ENCODE measurements at regions of chr1 and their contacts with region 1.

Region 1: GRCh38 chr1:153510984-153511410 is 24.8 kb downstream of the S100A6 start:
- DNase-seq: no peak
- ATAC-seq: peak; percentile 97
- H3K4me3 ChIP-seq: no peak overlapping the region
- H3K27ac ChIP-seq: no peak overlapping the region
- H3K4me1 ChIP-seq: no peaks in the 10 kb centered on the region
- H3K27me3 ChIP-seq: no peaks in the 10 kb centered on the region
- CTCF ChIP-seq: peak; percentile 85 to 97 (median 91)
- EP300 ChIP-seq: no peak
- POLR2A ChIP-seq: no peak
- RAD21 ChIP-seq: peak; percentile 92

Region 2: DNA sequence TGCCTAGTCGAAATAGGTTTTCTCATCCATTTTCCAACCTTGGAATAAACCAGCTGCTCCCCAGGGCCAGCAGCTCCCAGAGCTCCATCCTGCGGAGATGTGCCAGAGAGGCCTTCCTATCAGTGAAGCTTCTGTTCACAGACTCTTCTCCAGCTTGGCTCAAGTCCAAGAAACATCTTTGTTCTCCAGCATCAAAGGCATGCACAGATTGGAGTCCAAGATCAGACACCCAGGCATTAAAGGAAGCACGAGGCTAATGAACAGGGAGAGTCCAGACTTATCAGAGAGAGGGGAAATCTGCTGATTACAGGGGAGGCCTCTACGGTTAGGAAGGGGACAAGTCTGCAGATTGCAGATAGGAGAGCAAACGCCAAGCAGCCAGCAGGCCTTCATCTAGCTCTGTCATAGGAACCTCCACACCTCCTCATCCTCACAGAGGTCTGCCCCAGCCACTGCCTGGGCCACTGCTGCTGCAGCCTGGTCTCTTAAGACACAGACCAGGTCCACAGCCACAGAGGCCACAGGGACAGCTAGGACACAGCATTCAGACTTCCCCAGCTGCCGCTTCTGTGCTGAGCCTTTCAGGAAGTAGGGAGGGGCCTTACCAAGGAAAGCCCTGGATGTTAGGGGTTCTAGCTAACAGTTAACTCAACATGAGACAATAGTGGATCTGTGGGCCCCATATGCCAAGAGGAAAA is 290.2 kb before region 1 on chr1:
- CTCF ChIA-PET with region 1: no interaction called
- POLR2A ChIA-PET with region 1: no interaction called
- RAD21 ChIA-PET with region 1: no interaction called
- SMC1A ChIA-PET with region 1: no interaction called
- in situ Hi-C with region 1: no loop called
- intact Hi-C with region 1: no loop called
- DNase-seq: no peak
- ATAC-seq: no peak
- H3K4me3 ChIP-seq: no peak overlapping the region
- H3K27ac ChIP-seq: no peak overlapping the region
- H3K4me1 ChIP-seq: no peaks in the 10 kb centered on the region
- H3K27me3 ChIP-seq: peaks cover 0 to 2% of the 10 kb centered on the region in 2 experiments; a peak in 1 of 4 replicates
- CTCF ChIP-seq: no peak
- EP300 ChIP-seq: no peak
- POLR2A ChIP-seq: no peak
- RAD21 ChIP-seq: no peak

Region 3: DNA sequence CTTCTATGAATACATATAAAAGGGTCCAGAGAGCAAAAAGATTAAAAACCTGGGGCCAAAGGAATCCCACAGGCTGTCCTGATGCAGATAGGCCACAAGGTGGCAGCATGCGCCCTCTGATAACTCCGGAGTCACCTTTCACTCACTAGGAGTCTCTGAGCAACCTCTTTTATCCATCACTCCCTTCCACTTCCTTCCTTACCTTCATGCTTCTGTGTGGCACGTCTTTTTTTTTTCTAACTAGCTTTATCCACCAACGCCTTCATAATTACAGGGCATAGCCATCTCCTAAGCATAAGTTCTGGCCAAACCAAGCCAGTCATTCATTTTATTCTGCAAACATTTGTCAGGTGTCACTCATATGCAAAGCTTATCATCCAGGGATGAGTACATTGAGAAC is 158.5 kb before region 1 on chr1:
- CTCF ChIA-PET with region 1: interaction called, 14 read pairs
- POLR2A ChIA-PET with region 1: no interaction called
- RAD21 ChIA-PET with region 1: interaction called, 3 read pairs
- SMC1A ChIA-PET with region 1: interaction called, 3 read pairs
- in situ Hi-C with region 1: no loop called
- intact Hi-C with region 1: no loop called
- DNase-seq: no peak
- ATAC-seq: peak; percentile 73
- H3K4me3 ChIP-seq: no peak overlapping the region
- H3K27ac ChIP-seq: no peak overlapping the region
- H3K4me1 ChIP-seq: peaks cover 12% of the 10 kb centered on the region
- H3K27me3 ChIP-seq: no peaks in the 10 kb centered on the region
- CTCF ChIP-seq: peak; percentile 80 to 88 (median 83)
- EP300 ChIP-seq: no peak
- POLR2A ChIP-seq: no peak
- RAD21 ChIP-seq: peak; percentile 82

Region 4: DNA sequence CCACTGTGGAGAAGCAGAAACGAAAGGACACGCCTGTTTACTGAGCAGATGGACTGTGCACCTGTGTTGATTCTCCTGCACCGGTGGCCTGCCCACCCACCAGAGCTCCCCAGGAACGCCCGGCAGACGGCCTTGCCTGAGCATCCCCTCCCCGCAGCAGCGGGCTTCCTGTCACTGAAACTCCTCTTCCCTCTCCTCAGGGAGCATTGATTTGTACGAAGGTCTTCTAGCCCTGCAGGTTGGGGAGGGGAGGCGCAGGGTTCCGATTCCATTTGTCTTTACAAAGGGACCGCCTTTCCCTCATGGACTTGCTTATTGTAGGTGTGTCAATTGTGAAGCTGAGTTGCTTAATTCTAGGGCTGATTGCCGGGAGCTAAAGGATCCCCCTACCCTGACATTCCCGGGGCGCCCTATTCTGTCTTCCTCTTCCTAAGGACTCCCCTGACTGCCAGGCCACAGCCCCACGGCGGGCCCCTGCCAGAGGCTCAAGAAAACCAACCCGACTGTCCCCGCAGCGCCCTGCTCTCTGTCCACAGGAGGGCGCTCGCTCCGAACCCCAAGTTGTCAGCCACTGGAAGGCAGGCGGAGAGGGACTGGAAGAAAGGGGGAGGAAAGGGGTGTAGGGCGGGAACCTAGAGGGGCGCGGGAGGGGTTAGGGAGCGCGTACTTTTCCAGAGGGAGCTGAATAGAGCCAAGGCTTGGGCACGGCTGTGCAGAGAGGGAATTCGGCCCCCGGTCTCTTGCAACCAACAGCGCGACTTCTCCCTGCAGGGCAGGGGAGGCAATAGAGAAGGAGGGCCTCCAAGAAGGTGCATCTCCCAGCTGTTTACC is 22.0 kb after region 1 on chr1:
- CTCF ChIA-PET with region 1: interaction called, 41 read pairs
- POLR2A ChIA-PET with region 1: interaction called, 3 read pairs
- RAD21 ChIA-PET with region 1: interaction called, 5 read pairs
- SMC1A ChIA-PET with region 1: interaction called, 19 read pairs
- in situ Hi-C with region 1: no loop called
- intact Hi-C with region 1: no loop called
- DNase-seq: no peak
- ATAC-seq: peak; percentile 51
- H3K4me3 ChIP-seq: no peak overlapping the region
- H3K27ac ChIP-seq: no peak overlapping the region
- H3K4me1 ChIP-seq: peaks cover 12% of the 10 kb centered on the region
- H3K27me3 ChIP-seq: no peaks in the 10 kb centered on the region
- CTCF ChIP-seq: peak; percentile 73 to 86 (median 73)
- EP300 ChIP-seq: no peak
- POLR2A ChIP-seq: no peak
- RAD21 ChIP-seq: peak; percentile 74

Region 5: GRCh38 chr1:153577624-153578051 is 66.6 kb after region 1 on chr1:
- CTCF ChIA-PET with region 1: interaction called, 191 read pairs
- POLR2A ChIA-PET with region 1: no interaction called
- RAD21 ChIA-PET with region 1: interaction called, 26 read pairs
- SMC1A ChIA-PET with region 1: interaction called, 30 read pairs
- in situ Hi-C with region 1: no loop called
- intact Hi-C with region 1: no loop called
- DNase-seq: no peak
- ATAC-seq: no peak
- H3K4me3 ChIP-seq: no peak overlapping the region
- H3K27ac ChIP-seq: no peak overlapping the region
- H3K4me1 ChIP-seq: peaks cover 5% of the 10 kb centered on the region
- H3K27me3 ChIP-seq: no peaks in the 10 kb centered on the region
- CTCF ChIP-seq: no peak
- EP300 ChIP-seq: no peak
- POLR2A ChIP-seq: no peak
- RAD21 ChIP-seq: no peak

Region 6: GRCh38 chr1:153626922-153627796 is 116.2 kb after region 1 on chr1 and contains the start of gene S100A13:
- CTCF ChIA-PET with region 1: interaction called, 17 read pairs
- POLR2A ChIA-PET with region 1: interaction called, 3 read pairs
- RAD21 ChIA-PET with region 1: no interaction called
- SMC1A ChIA-PET with region 1: interaction called, 12 read pairs
- in situ Hi-C with region 1: no loop called
- intact Hi-C with region 1: no loop called
- DNase-seq: no peak
- ATAC-seq: peak; percentile 80
- H3K4me3 ChIP-seq: no peak within 1 kb of the TSS
- H3K27ac ChIP-seq: no peak within 1 kb of the TSS
- H3K4me1 ChIP-seq: peaks cover 14% of the 10 kb centered on the region
- H3K27me3 ChIP-seq: no peaks in the 10 kb centered on the region
- CTCF ChIP-seq: peak; percentile 49 to 66 (median 56)
- EP300 ChIP-seq: no peak
- POLR2A ChIP-seq: peak; percentile 29; the same call in 1 of the 2 replicates
- RAD21 ChIP-seq: peak; percentile 41; the same call in 1 of the 2 replicates
- polyA plus RNA-seq, gene S100A13: 29.7 to 30.9 TPM

Region 7: DNA sequence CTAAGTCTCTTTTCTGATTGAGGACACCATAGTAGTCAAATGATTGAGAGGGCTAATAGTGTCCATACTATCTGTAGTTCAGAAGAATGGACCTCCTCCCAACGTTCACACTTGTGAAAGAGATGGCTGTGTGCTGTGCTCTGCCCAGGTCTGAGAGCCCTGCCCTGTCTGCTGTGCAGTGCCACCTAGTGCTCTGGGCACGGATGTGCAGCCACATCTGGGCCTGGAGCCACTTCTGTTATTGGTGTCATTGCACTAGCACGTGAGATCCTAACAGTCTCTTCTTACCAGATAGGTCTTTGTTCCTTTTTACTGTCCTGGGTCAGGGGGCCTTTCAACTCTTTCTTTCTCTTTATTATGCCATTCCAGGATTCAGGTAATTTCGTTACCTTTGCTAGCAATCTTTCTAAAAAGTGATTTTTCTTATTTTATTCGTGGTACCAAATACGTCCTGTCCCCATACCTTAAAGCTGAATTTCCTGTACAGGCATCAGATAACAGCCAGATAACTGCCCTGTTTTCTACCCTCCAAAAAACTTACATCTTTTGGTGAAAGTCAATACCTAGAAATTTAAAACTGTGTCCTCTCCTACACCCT is 238.5 kb after region 1 on chr1:
- CTCF ChIA-PET with region 1: interaction called, 4 read pairs
- POLR2A ChIA-PET with region 1: no interaction called
- RAD21 ChIA-PET with region 1: no interaction called
- SMC1A ChIA-PET with region 1: interaction called, 4 read pairs
- in situ Hi-C with region 1: no loop called
- intact Hi-C with region 1: loop called (anchors 5 kb)
- DNase-seq: peak; percentile 48
- ATAC-seq: peak; percentile 100
- H3K4me3 ChIP-seq: no peak overlapping the region
- H3K27ac ChIP-seq: no peak overlapping the region
- H3K4me1 ChIP-seq: no peaks in the 10 kb centered on the region; the same call in 1 of the 2 replicates
- H3K27me3 ChIP-seq: no peaks in the 10 kb centered on the region
- CTCF ChIP-seq: peak; percentile 97 to 99 (median 99); a peak in 5 of 6 replicates
- EP300 ChIP-seq: no peak
- POLR2A ChIP-seq: no peak
- RAD21 ChIP-seq: peak; percentile 82